ENCODE measurements at regions of chr16 and their contacts with region 1.

Region 1: GRCh38 chr16:14364386-14365204 is 265.5 kb downstream of the PARN start:
- DNase-seq: peak; percentile 98 to 99
- H3K4me3 ChIP-seq: peak overlapping the region; percentile 49; the same call in 1 of the 2 replicates
- H3K27ac ChIP-seq: peak overlapping the region; percentile 98
- H3K4me1 ChIP-seq: peaks cover 32% of the 10 kb centered on the region
- H3K27me3 ChIP-seq: no peaks in the 10 kb centered on the region
- CTCF ChIP-seq: no peak

Region 2: GRCh38 chr16:14310519-14310991 is 54.0 kb before region 1 on chr16:
- CTCF ChIA-PET with region 1: interaction called, 3 read pairs
- POLR2A ChIA-PET with region 1: interaction called, 5 read pairs
- intact Hi-C with region 1: loop called (anchors 1 kb)
- DNase-seq: peak; percentile 52 to 64
- H3K4me3 ChIP-seq: peak overlapping the region; percentile 96; the same call in 1 of the 2 replicates
- H3K27ac ChIP-seq: peak overlapping the region; percentile 99
- H3K4me1 ChIP-seq: peaks cover 81% of the 10 kb centered on the region
- H3K27me3 ChIP-seq: no peaks in the 10 kb centered on the region
- CTCF ChIP-seq: peak; percentile 48; the same call in 1 of the 2 replicates

Region 3: DNA sequence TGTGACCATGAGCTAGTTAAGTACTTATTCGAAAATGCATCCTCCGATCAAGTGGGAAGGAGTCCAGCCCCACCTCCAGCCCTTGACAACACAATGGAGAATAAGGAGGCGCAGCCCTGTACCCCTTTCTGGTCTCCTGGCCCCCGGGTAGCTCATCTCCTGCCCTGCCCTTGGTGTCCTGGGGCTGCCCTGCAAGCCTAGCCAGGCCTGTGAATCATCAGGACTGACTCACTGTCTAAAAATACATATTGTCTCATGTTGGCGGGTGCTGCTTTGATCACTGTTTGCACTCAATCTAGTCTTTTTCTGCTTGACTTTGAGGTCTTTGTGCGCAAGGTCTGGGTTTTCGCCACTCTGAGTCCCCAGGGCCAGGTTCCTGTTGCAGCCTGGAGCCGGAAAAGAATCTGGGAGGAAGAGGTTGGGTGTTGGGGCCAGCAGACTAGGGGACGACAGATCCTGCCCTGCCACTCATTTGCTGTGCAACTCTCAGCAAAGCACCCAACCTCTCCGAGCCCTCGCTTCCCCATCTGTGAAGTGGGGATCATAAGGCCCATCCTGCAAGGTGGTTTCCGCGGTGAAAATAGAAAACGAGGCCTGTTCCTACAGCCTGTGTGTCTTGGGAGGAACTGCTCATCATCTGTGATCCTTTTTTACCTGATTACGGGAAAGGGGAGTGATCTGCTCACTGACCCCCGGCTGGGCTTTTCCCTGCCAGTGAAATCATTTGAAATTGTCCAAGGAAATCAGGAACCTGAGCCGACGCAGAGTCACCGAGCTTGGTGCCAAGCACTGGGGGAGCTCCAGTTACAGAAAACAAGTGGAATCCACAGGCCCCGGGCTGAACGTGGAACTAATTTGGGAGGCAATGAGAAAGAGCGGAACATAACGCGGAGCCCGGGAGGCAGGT is 35.0 kb after region 1 on chr16:
- CTCF ChIA-PET with region 1: no interaction called
- POLR2A ChIA-PET with region 1: interaction called, 7 read pairs
- intact Hi-C with region 1: loop called (anchors 2 kb)
- DNase-seq: peak; percentile 83 to 85
- H3K4me3 ChIP-seq: peak overlapping the region; percentile 45
- H3K27ac ChIP-seq: peak overlapping the region; percentile 92
- H3K4me1 ChIP-seq: peaks cover 51% of the 10 kb centered on the region
- H3K27me3 ChIP-seq: no peaks in the 10 kb centered on the region
- CTCF ChIP-seq: no peak

Region 4: GRCh38 chr16:14486520-14487303 is 122.1 kb after region 1 on chr16:
- CTCF ChIA-PET with region 1: no interaction called
- POLR2A ChIA-PET with region 1: no interaction called
- intact Hi-C with region 1: loop called (anchors 1 kb)
- DNase-seq: peak; percentile 79 to 89
- H3K4me3 ChIP-seq: peak overlapping the region; percentile 47; the same call in 1 of the 2 replicates
- H3K27ac ChIP-seq: peak overlapping the region; percentile 81
- H3K4me1 ChIP-seq: peaks cover 40% of the 10 kb centered on the region
- H3K27me3 ChIP-seq: no peaks in the 10 kb centered on the region
- CTCF ChIP-seq: no peak